ENCODE measurements at regions of chr2 and their contacts with region 1.

Region 1: DNA sequence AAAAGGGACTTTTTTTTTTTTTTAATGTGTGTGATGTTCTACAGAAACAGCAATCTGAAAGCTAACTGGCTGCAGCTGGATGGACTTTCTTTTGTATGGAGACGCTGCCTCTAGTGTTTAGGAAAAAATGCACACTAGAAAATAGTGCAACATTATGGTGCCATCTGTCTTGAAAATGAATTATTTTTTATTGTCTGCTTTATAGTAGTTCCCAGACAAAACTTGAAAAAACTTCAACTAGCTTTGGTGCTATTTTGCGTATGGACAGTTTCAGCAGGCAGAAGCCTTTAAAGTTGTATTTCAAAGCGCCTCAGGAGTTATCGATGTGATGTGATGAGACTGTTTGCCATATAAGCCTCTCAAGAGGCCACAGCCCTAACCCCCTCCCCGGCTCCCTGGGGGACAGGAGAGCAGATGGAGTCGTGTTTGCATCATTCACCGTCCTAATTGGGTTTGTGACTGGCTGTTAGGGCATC is 86.9 kb downstream of the LTBP1 start:
- DNase-seq: peak in 1 of 2 experiments; percentile 69
- ATAC-seq: peak; percentile 76 to 87; a peak in 5 of 6 replicates
- H3K4me3 ChIP-seq: no peak overlapping the region
- H3K27ac ChIP-seq: peak overlapping the region in 1 of 2 experiments; percentile 3; a peak in 1 of 6 replicates
- H3K4me1 ChIP-seq: peaks cover 4% of the 10 kb centered on the region; the same call in 1 of the 3 replicates
- CTCF ChIP-seq: peak; percentile 86
- EP300 ChIP-seq: no peak
- POLR2A ChIP-seq: no peak
- RAD21 ChIP-seq: peak; percentile 91

Region 2: GRCh38 chr2:32772638-32773447 is 260.8 kb before region 1 on chr2:
- CTCF ChIA-PET with region 1: interaction called, 88 read pairs
- POLR2A ChIA-PET with region 1: no interaction called
- DNase-seq: peak; percentile 43 to 62
- ATAC-seq: peak; percentile 87 to 93
- H3K4me3 ChIP-seq: no peak overlapping the region
- H3K27ac ChIP-seq: peak overlapping the region in 1 of 2 experiments; percentile 13; a peak in 1 of 6 replicates
- H3K4me1 ChIP-seq: no peaks in the 10 kb centered on the region
- CTCF ChIP-seq: peak; percentile 99
- EP300 ChIP-seq: no peak
- POLR2A ChIP-seq: no peak
- RAD21 ChIP-seq: peak; percentile 98 to 99

Region 3: DNA sequence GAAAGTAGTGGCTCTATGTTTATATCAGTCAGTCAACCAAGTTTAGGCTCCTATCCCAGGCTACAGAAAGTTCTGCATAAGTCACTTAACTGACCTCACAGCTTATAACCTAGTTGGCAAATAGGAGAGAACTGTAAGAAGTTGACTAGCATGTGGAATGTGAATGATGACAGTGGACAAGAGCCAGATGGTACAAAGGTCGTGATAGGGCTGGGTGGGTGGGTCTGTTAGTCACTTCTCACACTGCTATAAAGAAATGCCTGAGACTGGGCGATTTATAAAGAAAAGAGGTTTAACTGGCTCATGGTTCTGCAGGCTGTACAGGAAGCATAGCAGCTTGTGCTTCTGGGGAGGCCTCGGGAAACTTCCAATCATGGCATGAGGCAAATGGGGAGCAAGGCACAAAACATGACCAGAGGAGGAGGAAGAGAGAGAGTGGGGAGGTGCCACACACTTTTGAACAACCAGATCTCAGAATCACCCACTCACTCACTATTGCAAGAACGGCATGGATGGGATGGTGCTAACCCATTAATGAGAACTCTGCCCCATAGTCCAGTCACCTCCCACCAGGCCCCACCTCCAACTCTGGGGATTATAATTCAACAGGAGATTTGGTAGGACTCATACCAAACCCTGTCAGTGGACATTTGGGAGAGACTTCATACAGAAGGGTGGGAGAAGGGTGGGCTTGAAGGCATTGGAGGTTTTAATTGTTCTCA is 18.1 kb before region 1 on chr2:
- CTCF ChIA-PET with region 1: interaction called, 38 read pairs
- POLR2A ChIA-PET with region 1: no interaction called
- DNase-seq: peak; percentile 50 to 89
- ATAC-seq: peak; percentile 82 to 90
- H3K4me3 ChIP-seq: no peak overlapping the region
- H3K27ac ChIP-seq: peak overlapping the region; percentile 69 to 83
- H3K4me1 ChIP-seq: peaks cover 69% of the 10 kb centered on the region
- CTCF ChIP-seq: no peak
- EP300 ChIP-seq: no peak; a peak in 1 of 5 replicates
- POLR2A ChIP-seq: no peak
- RAD21 ChIP-seq: no peak; a peak in 1 of 5 replicates

Region 4: GRCh38 chr2:33051586-33052360 is 18.1 kb after region 1 on chr2:
- CTCF ChIA-PET with region 1: interaction called, 13 read pairs
- POLR2A ChIA-PET with region 1: interaction called, 3 read pairs
- DNase-seq: peak; percentile 66 to 95
- ATAC-seq: peak; percentile 97 to 99
- H3K4me3 ChIP-seq: 0 out of 3 replicates have a peak overlapping the region, but pooled peaks have one; percentile 8
- H3K27ac ChIP-seq: peak overlapping the region; percentile 84 to 85
- H3K4me1 ChIP-seq: peaks cover 32% of the 10 kb centered on the region
- CTCF ChIP-seq: no peak
- EP300 ChIP-seq: peak; percentile 80 to 84; a peak in 4 of 5 replicates
- POLR2A ChIP-seq: no peak
- RAD21 ChIP-seq: peak; percentile 16 to 55; a peak in 3 of 5 replicates

Region 5: GRCh38 chr2:33086400-33087015 is 52.9 kb after region 1 on chr2:
- CTCF ChIA-PET with region 1: interaction called, 11 read pairs
- POLR2A ChIA-PET with region 1: no interaction called
- DNase-seq: peak in 1 of 2 experiments; percentile 25
- ATAC-seq: no peak
- H3K4me3 ChIP-seq: no peak overlapping the region
- H3K27ac ChIP-seq: peak overlapping the region in 1 of 2 experiments; percentile 2; a peak in 1 of 6 replicates
- H3K4me1 ChIP-seq: peaks cover 13% of the 10 kb centered on the region
- CTCF ChIP-seq: peak; percentile 23; the same call in 1 of the 3 replicates
- EP300 ChIP-seq: no peak
- POLR2A ChIP-seq: no peak
- RAD21 ChIP-seq: peak; percentile 34 to 60

Region 6: DNA sequence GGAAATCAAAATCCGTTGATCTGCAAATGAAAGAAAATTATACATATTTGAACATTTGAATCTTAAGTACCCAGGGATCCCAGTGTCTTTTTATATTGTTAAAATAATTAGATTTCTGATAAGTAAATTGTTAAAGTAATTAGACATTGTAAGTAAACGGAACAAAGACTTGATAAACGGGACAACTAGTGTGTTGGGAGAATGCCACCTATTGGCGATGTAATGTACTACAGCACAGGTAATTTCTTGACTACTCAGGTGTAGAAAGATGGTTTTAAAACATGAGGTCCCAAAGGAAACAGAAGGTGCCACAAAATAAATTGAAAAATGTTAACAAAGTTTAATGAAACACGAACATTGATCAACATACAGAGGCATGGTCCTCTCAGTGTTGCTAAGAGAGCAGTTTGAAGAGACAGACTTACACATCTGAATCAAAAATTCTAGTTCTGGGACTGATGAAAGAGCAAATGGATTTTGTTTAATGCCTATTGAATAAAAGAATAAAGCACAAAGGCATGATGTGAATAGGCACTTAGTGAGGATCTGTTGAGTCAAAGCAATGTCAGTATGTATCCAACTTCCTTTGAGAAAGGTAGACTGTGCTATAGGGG is 339.4 kb after region 1 on chr2:
- CTCF ChIA-PET with region 1: interaction called, 23 read pairs
- POLR2A ChIA-PET with region 1: no interaction called
- DNase-seq: peak; percentile 61 to 77
- ATAC-seq: peak in 1 of 2 experiments; percentile 75; a peak in 3 of 6 replicates
- H3K4me3 ChIP-seq: no peak overlapping the region
- H3K27ac ChIP-seq: peak overlapping the region in 1 of 2 experiments; percentile 28; a peak in 2 of 6 replicates
- H3K4me1 ChIP-seq: peaks cover 7% of the 10 kb centered on the region; the same call in 2 of the 3 replicates
- CTCF ChIP-seq: peak; percentile 96
- EP300 ChIP-seq: no peak
- POLR2A ChIP-seq: no peak
- RAD21 ChIP-seq: peak; percentile 94

Region 7: GRCh38 chr2:33441235-33441810 is 407.7 kb after region 1 on chr2:
- CTCF ChIA-PET with region 1: interaction called, 15 read pairs
- POLR2A ChIA-PET with region 1: no interaction called
- DNase-seq: peak; percentile 59 to 80
- ATAC-seq: peak; percentile 98
- H3K4me3 ChIP-seq: no peak overlapping the region
- H3K27ac ChIP-seq: peak overlapping the region in 1 of 2 experiments; percentile 10; a peak in 1 of 6 replicates
- H3K4me1 ChIP-seq: no peaks in the 10 kb centered on the region; the same call in 2 of the 3 replicates
- CTCF ChIP-seq: peak; percentile 93
- EP300 ChIP-seq: no peak
- POLR2A ChIP-seq: no peak
- RAD21 ChIP-seq: peak; percentile 95 to 98

Region 8: DNA sequence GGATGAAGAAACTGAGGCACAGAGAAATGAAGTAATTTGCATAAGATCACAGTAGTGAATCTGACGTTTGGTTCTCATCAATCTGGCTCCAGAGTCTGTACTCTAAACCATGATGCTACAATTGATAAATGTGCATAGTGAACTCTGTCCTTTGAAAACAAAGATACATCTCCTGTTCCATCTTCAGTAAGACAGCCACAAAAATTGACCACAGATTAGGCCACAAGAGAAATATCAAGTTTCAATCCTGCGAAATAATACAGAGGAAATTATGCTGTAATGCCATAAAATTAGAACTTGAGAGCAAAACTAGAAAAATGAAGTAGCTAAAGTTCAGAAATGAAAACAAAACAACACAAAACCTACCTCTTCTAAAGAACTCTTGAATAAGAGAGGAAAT is 537.0 kb after region 1 on chr2:
- CTCF ChIA-PET with region 1: no interaction called
- POLR2A ChIA-PET with region 1: no interaction called
- DNase-seq: no peak
- ATAC-seq: no peak
- H3K4me3 ChIP-seq: no peak overlapping the region
- H3K27ac ChIP-seq: no peak overlapping the region
- H3K4me1 ChIP-seq: 0 out of 3 replicates have a peak, but pooled peaks cover 3% of the 10 kb centered on the region
- CTCF ChIP-seq: no peak
- EP300 ChIP-seq: no peak
- POLR2A ChIP-seq: no peak
- RAD21 ChIP-seq: no peak

Measured in A549 (cell line).